Caco-2 (cell line): ENCODE measurements at regions of chr12 and their contacts with region 1.

Region 1: DNA sequence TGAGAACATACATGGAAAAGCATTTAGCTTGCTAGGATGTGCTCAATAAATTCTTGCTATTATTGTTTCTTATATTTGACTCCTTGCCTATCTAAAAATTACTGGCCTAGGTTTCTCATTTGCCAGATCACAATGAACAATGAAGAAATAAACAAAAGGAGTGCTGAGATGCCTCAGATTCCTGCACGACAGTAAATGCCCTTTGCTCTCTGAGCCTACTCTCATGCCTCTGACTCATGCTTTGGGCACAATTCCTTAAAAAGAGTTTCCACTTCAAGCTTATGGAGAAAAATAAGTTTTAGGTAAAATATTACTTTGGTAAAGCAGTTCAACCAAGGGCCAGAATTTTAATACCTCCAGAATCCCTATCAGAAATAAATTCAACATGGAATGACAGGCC is 30.9 kb downstream of the GRIN2B start:
- DNase-seq: peak; percentile 71 to 79
- H3K4me3 ChIP-seq: no peak overlapping the region
- H3K4me3 Mint-ChIP-seq: peak overlapping the region; percentile 36
- H3K27ac Mint-ChIP-seq: peak overlapping the region; percentile 69
- H3K4me1 ChIP-seq: peaks cover 46% of the 10 kb centered on the region
- H3K4me1 Mint-ChIP-seq: peaks cover 44% of the 10 kb centered on the region
- H3K27me3 ChIP-seq: no peaks in the 10 kb centered on the region
- H3K27me3 Mint-ChIP-seq: no peaks in the 10 kb centered on the region
- CTCF ChIP-seq: no peak

Region 2: GRCh38 chr12:13784504-13784903 is 166.0 kb before region 1 on chr12:
- CTCF ChIA-PET with region 1: no interaction called
- POLR2A ChIA-PET with region 1: no interaction called
- intact Hi-C with region 1: loop called (anchors 1 kb)
- DNase-seq: no peak
- H3K4me3 ChIP-seq: no peak overlapping the region
- H3K4me3 Mint-ChIP-seq: no peak overlapping the region
- H3K27ac Mint-ChIP-seq: peak overlapping the region; percentile 43
- H3K4me1 ChIP-seq: peaks cover 31% of the 10 kb centered on the region
- H3K4me1 Mint-ChIP-seq: peaks cover 43% of the 10 kb centered on the region
- H3K27me3 ChIP-seq: no peaks in the 10 kb centered on the region
- H3K27me3 Mint-ChIP-seq: no peaks in the 10 kb centered on the region
- CTCF ChIP-seq: no peak

Region 3: DNA sequence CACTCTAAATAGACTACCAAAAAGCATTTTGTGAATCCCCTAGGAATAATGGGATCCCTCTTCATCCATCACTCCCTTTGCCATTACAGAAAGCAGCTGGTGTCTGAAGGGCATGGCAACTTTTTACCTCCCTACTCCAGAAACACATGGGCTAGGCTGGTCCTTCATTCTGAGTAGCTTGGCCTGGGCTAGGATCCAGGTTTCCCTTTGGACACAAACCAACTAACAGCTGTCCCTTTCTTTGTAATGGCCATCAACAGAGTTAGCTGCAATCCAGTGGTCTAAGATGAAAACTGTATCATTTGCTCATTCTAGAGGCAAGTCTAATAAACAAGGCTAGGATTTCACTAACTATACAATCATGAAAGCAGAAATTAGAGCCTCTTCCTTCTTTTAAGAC is 23.5 kb after region 1 on chr12:
- CTCF ChIA-PET with region 1: no interaction called
- POLR2A ChIA-PET with region 1: no interaction called
- intact Hi-C with region 1: loop called (anchors 2 kb)
- DNase-seq: no peak
- H3K4me3 ChIP-seq: no peak overlapping the region
- H3K4me3 Mint-ChIP-seq: no peak overlapping the region
- H3K27ac Mint-ChIP-seq: no peak overlapping the region
- H3K4me1 ChIP-seq: peaks cover 21% of the 10 kb centered on the region
- H3K4me1 Mint-ChIP-seq: peaks cover 40% of the 10 kb centered on the region
- H3K27me3 ChIP-seq: no peaks in the 10 kb centered on the region
- H3K27me3 Mint-ChIP-seq: no peaks in the 10 kb centered on the region
- CTCF ChIP-seq: no peak

Region 4: GRCh38 chr12:14540801-14541462 is 590.4 kb after region 1 on chr12:
- CTCF ChIA-PET with region 1: no interaction called
- POLR2A ChIA-PET with region 1: no interaction called
- intact Hi-C with region 1: no loop called
- DNase-seq: no peak
- H3K4me3 ChIP-seq: no peak overlapping the region
- H3K4me3 Mint-ChIP-seq: no peak overlapping the region
- H3K27ac Mint-ChIP-seq: no peak overlapping the region
- H3K4me1 ChIP-seq: no peaks in the 10 kb centered on the region
- H3K4me1 Mint-ChIP-seq: no peaks in the 10 kb centered on the region
- H3K27me3 ChIP-seq: no peaks in the 10 kb centered on the region
- H3K27me3 Mint-ChIP-seq: no peaks in the 10 kb centered on the region
- CTCF ChIP-seq: no peak